OCI-LY7 (cell line): ENCODE measurements at regions of chr16 and their contacts with region 1.

Region 1: GRCh38 chr16:31734265-31734664 is 139.3 kb upstream of the ZNF267 start:
- DNase-seq: no peak
- H3K4me3 ChIP-seq: no peak overlapping the region
- H3K27ac ChIP-seq: no peak overlapping the region
- H3K4me1 ChIP-seq: no peaks in the 10 kb centered on the region
- CTCF ChIP-seq: no peak

Region 2: GRCh38 chr16:31785126-31785525 is 50.9 kb after region 1 on chr16:
- CTCF ChIA-PET with region 1: no interaction called
- POLR2A ChIA-PET with region 1: no interaction called
- intact Hi-C with region 1: loop called (anchors 10 kb)
- DNase-seq: no peak
- H3K4me3 ChIP-seq: no peak overlapping the region
- H3K27ac ChIP-seq: no peak overlapping the region
- H3K4me1 ChIP-seq: no peaks in the 10 kb centered on the region
- CTCF ChIP-seq: no peak